ENCODE measurements at regions of chr18 and their contacts with region 1.

Region 1: DNA sequence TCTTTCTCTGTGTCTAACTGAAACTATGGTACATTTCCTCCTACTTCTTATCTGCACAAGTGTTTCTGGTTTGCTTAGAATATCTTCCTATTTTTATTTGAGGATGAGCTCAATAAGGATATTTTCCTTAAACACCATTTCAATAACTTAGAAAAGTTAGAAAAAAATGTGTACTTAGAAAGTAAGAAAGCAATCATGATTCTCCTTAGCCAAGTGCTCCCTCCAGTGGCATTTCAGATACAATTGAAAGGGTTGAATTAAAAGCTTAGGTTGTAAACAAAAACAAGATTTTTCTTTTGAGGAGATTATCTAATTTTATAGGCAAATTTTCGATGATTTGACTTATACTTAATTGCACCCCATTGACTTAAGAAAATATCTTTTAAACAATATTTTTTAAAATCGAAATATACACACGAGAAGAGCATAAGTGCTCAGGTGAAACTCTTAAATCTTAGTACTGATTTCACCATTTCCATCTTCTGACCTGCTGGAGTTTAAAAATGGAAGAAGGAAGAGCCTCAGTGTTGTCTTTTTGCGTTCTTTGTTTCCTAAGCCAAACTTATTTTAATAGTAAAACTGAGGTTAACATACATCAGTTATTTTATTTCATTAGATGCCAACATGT is 26.9 kb downstream of the C18orf63 start:
- DNase-seq: peak; percentile 14
- CTCF ChIP-seq: peak; percentile 61

Region 2: DNA sequence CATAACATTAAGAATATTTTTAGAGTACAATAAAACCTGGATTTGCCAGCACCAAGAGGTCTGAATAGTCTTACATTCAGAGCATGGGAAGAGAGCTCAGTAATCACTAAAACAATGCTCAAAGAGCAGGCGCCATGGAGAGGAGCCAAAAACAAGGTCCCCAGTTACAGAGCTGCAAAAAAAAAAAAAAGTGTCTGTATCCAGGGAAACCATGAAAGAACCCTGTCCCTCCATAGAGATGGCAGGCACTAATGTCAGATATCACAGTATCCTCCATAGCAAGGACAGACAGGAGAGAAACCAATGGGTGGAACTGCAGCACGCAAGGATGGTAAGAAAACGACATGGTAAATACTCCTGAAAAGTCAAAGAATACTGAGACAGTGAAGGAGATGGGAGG is 214.4 kb before region 1 on chr18:
- in situ Hi-C with region 1: no loop called
- DNase-seq: no peak
- CTCF ChIP-seq: no peak

Region 3: DNA sequence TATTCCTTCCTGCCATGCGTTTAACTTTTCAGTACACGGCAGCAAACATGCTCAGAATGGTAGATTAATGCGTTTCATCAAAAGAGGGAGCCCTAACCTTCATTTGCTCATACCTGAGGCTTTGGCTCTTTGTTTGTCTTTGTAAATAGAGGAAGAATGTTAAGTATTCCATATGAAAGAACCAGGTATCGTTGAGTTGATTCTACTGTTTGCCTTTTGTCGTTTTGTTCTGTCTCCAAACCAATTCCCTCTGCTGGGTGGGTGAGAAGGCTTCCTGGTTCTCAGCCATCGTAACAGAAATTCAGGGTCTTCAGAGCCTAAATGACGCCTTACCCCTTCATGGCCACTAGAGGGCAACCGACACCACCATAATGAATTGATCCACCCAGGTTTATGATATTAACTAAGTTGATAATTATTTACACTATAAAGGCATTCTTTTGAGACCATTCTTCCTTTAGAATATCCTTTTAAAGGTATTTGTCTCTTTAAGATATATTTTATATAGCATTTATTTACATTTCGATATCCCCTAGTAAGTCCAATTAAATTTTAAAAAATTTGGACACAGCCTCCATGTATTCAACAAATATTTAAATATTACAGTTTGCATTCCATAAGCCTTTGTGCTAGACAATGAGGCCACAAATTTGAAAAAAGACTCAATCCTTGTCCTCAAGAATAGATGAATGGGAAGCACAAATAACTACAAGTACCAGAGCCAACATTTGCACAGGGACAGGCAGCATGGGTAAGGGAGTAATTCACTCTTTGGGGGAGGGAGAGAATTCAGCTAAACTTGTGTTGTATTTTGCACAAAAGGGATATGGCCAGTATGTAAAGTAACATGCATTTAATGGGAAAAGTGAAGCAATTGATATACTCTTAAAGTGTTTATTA is 146.1 kb before region 1 on chr18:
- in situ Hi-C with region 1: loop called (anchors 25 kb)
- DNase-seq: peak; percentile 87
- CTCF ChIP-seq: peak; percentile 82

Region 4: DNA sequence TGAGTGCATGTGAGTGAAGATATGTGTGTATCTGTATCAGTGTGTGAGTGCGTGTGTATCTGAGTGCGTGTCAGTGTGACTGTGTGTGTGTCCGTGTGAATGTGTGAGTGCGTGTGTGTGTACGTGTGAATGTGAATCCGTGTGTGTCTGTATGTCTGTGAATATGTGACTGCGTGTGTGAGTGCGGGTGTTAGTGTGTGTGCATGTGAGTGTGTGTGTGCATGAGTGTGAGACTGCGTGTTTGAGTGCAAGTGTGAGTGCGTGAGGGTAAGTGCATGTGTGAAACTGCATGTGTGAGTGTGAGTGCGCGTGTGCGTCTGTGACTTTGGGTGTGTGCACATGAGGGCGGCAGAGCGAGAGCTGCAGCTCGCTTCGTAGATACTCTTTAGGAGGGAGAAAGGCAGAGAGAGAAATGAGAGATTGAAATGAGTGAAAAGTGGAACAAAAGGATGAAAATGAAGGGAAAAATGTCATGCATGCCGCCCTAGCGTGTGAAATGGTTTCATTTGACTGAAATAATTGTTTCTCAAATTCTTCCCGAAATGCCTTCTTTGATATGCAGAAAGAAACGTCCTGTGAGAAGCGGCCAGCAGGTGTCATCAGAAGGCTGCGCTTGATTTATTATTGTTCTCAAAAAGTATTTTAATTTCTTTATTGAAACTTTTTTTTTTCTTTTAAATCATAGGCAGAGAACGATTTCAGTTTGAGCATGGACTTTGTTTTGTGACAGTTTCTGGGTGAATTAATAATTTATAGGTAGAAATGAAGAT is 280.7 kb after region 1 on chr18:
- in situ Hi-C with region 1: no loop called
- DNase-seq: no peak
- CTCF ChIP-seq: peak; percentile 42